ENCODE measurements at regions of chr4 and their contacts with region 1.

Region 1: GRCh38 chr4:75989846-75990528 is 758 bp downstream of the SDAD1 start:
- DNase-seq: no peak

Region 2: DNA sequence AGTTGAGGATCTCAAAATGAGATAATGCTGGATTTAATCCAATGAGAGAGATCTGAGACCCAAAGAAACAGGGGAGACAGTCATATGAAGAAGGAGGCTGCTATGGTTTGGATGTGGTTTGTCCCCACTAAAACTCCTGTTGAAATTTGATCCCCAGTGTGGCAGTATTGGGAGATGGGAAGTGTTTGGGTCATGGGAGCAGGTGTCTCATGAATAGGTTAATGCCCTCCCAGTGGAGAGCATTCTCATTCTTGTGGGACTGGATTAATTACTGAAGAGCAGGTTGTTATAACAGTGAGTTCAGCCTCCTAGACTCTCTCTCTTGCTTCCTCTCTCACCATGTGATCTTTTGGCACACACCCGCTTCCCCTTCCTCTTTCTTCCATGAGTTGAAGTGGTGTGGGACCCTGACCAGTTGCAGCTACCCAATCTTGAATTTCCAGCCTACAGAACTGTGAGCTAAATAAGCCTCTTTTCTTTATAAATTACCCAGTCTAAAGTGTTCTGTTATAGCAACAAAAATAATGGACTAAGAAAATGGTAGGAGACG is 158.1 kb before region 1 on chr4:
- intact Hi-C with region 1: no loop called
- DNase-seq: peak in 6 of 42 donors; percentile 8 to 43 (median 20)

Region 3: DNA sequence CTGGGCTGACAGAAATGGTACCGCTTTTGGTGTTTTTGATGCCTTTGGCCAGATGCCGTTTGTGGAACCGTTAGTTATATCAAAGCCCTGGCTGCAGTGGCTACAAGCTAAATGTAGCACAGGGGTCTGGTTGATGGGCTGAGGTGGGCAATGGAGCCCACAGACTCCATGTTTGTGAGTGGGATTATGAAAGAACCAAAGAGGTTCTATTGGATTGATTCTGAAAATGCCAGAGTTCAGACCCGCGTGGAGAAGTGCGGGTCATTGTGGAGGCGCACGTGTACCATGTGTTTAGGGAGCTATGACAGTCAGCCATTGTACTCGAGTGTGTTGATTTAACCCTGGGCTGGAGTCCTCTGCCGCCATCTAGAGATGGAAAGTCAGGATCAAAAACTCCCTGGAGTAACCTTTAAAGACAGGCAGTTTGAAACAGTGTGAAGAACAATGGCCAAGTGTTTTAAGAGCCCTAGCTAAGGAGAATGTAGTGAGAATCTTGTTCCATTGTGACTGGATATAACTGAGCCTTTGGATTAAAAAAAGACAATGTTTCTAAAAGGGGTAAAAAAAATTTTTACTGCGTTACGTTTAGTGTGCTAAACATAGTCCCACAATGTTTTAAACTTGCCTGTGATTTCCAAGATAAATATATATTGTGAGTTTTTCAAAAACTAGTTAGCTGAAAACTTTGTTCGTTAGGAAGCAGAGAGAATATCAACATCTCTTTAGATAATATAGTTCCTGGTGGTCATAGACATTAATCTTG is 97.2 kb after region 1 on chr4:
- intact Hi-C with region 1: loop called (anchors 5 kb)
- DNase-seq: peak; percentile 34 to 91 (median 79)

Region 4: DNA sequence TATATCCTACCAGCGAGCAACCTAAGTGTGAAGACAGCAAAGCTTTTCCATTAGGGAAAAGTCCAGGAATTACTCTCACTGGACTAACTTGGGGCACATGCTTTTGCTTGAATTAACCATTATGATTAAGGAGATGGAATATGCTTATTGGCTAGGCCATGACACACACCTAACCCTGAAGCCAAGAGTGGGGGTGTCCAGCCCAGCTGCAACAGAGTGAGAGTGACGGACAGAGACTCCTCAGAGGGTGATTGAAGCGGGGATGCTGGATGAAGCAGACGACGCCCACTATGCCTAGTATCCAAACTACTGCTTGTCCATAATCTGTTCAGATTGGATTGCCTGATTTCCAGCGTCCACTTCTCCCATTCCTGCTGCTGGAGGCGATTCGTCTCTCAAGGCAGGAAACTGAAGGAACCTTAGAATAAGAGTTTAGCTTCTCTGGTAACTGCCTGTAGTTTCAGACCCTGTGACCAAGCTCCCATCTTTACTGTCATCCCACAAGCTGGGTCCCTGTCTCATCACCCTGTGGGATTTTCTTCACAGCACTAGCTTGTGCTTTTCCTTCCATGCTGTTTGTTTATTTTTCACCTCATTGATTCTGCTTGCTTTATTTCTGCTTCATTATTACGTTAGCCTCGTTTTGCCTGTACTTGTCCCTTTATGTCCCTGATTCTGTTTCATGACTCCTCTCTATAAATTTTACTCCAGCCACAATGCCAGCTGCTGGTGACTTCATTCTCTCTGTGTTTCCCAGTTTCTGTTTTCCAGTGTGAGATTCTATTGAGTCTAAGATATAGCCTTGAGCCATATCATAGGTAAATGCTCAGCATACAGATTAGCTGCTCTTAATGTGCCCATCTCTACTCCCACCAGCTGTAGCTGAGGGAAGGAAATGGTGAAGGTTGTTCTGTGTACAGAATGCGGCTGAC is 280.5 kb after region 1 on chr4:
- intact Hi-C with region 1: no loop called
- DNase-seq: no peak

Region 5: GRCh38 chr4:76607266-76607799 is 617.3 kb after region 1 on chr4:
- intact Hi-C with region 1: no loop called
- DNase-seq: no peak

Measured in head of caudate nucleus (tissue), 42 donors.